Dorsolateral prefrontal cortex (tissue), 120 donors: ENCODE measurements at regions of chr17 and their contacts with region 1.

Region 1: DNA sequence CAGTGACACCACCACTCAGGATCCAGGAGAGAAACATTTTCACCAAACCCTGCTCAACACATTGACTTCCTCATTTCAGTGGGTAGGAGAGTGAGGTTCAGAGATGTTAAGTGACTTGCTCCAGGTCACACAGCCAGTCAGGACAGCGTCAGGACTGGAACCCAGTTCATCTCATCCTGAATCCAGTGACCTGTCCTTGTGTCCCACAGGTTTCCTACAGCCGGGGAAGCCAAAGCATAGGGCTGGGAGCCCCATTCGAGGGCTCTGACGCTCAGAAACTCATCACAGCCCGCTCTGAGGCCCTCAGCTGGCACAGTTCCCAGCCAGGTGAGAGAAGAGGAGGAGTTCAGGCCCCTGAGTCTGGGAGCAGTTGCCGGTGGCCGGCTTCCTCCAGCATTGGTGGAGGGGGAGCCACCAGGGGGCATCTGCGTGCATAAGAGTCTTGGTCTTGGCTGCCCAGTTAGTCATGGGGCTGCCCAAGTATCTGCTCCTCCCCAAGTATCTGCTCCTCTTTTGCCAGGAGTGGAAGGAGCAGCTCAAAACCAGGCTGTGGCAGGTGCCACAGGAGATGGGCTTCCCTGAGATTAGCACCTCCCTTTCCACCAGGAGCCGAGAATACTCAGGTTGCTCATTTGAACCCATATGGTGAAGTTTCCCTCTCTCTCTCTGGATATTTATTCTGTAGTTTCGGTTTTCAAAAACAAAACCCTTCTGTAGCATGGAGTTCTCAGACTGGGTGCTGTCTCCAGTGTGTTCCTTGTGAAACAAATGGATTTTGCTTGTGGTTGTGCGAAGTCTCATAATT is 56.0 kb downstream of the TNFRSF13B start:
- DNase-seq: peak in 9 of 10 donors; percentile 24 to 62 (median 46)
- H3K4me3 ChIP-seq: no peak overlapping the region
- H3K27ac ChIP-seq: no peak overlapping the region
- H3K27me3 ChIP-seq: no peaks in the 10 kb centered on the region
- CTCF ChIP-seq: peak in 49 of 56 donors; percentile 17 to 64 (median 44)

Region 2: GRCh38 chr17:16973760-16974540 is 58.0 kb after region 1 on chr17:
- intact Hi-C with region 1: no loop called
- DNase-seq: no peak
- H3K4me3 ChIP-seq: no peak overlapping the region
- H3K27ac ChIP-seq: no peak overlapping the region
- H3K27me3 ChIP-seq: no peaks in the 10 kb centered on the region
- CTCF ChIP-seq: no peak

Region 3: GRCh38 chr17:16987830-16988601 is 72.1 kb after region 1 on chr17:
- intact Hi-C with region 1: loop called (anchors 5 kb)
- DNase-seq: peak in 8 of 10 donors; percentile 60 to 81 (median 68)
- H3K4me3 ChIP-seq: peak overlapping the region in 1 of 59 donors; percentile 10
- H3K27ac ChIP-seq: peak overlapping the region in 50 of 59 donors; percentile 3 to 85 (median 62)
- H3K27me3 ChIP-seq: no peaks in the 10 kb centered on the region
- CTCF ChIP-seq: no peak